Activated CD4-positive, alpha-beta memory T cell treated with anti-CD3 and anti-CD28 coated beads for 36 hours (primary cell): ENCODE measurements at regions of chr3 and their contacts with region 1.

Region 1: DNA sequence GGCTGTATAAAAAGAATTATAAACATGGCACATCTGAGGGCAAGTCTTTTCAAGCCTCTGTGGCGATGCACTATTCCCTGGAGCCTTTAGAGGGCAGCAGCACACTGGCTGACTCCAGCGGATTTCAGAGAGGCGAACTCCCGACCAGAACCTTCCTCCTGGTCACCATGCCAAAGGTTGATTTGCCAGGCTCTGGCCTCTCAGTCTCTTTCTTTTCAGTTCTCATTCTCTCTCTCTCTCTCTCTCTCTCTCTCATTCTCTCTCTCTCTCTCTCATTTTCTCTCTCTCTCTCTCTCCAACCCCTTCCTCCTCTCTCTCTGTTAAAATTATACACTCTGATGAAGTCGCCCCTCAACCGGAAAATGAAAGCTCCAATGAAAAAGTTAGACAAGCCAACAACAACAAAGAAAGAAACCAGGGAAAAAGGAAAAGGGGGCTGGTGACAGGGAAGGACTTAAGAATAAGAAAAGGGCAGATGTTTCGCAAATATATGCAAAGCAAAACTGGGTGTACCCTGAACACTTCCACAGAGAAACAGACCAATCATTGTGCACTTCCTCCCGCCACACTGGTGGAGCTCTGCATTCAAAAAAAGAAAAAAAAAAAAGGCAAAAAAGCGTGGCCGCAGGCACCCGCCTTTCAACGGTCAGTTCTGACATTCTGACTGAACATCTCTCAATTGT is 90.2 kb downstream of the TIGIT start:
- DNase-seq: peak; percentile 83
- H3K4me3 Mint-ChIP-seq: peak overlapping the region; percentile 68
- H3K27ac Mint-ChIP-seq: peak overlapping the region; percentile 77
- H3K4me1 Mint-ChIP-seq: peaks cover 6% of the 10 kb centered on the region
- H3K27me3 Mint-ChIP-seq: no peaks in the 10 kb centered on the region

Region 2: GRCh38 chr3:114405202-114405990 is 21.4 kb after region 1 on chr3:
- CTCF ChIA-PET with region 1: interaction called, 15 read pairs
- POLR2A ChIA-PET with region 1: no interaction called
- intact Hi-C with region 1: no loop called
- DNase-seq: no peak
- H3K4me3 Mint-ChIP-seq: no peak overlapping the region
- H3K27ac Mint-ChIP-seq: no peak overlapping the region
- H3K4me1 Mint-ChIP-seq: peaks cover 4% of the 10 kb centered on the region
- H3K27me3 Mint-ChIP-seq: no peaks in the 10 kb centered on the region

Region 3: GRCh38 chr3:114411811-114412803 is 28.1 kb after region 1 on chr3:
- CTCF ChIA-PET with region 1: interaction called, 19 read pairs
- POLR2A ChIA-PET with region 1: interaction called, 3 read pairs
- intact Hi-C with region 1: loop called (anchors 1 kb)
- DNase-seq: peak; percentile 57
- H3K4me3 Mint-ChIP-seq: no peak overlapping the region
- H3K27ac Mint-ChIP-seq: peak overlapping the region; percentile 44
- H3K4me1 Mint-ChIP-seq: peaks cover 24% of the 10 kb centered on the region
- H3K27me3 Mint-ChIP-seq: no peaks in the 10 kb centered on the region

Region 4: DNA sequence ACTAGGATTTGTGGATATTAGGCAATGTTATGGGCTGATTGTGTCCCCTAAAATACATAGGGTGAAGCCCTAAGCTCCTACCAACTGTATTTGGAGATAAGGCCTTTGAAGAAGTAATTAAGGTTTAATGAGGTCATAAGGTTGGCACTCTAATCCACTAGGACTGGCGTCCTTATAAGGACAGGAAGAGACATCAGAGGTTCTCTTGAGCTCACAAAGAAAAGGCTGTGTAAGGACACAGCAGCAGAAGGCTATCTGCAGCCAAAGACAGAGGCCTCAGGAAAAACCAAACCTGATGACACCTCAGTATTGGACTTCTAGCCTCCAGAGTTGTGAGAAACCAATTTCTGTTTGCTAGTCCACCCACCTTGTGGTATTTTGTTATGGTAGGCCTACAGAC is 346.4 kb after region 1 on chr3:
- CTCF ChIA-PET with region 1: no interaction called
- POLR2A ChIA-PET with region 1: no interaction called
- intact Hi-C with region 1: no loop called
- DNase-seq: no peak
- H3K4me3 Mint-ChIP-seq: no peak overlapping the region
- H3K27ac Mint-ChIP-seq: no peak overlapping the region
- H3K4me1 Mint-ChIP-seq: no peaks in the 10 kb centered on the region
- H3K27me3 Mint-ChIP-seq: no peaks in the 10 kb centered on the region

Region 5: GRCh38 chr3:114827495-114827894 is 443.5 kb after region 1 on chr3:
- CTCF ChIA-PET with region 1: no interaction called
- POLR2A ChIA-PET with region 1: no interaction called
- intact Hi-C with region 1: loop called (anchors 10 kb)
- DNase-seq: no peak
- H3K4me3 Mint-ChIP-seq: no peak overlapping the region
- H3K27ac Mint-ChIP-seq: no peak overlapping the region
- H3K4me1 Mint-ChIP-seq: peaks cover 4% of the 10 kb centered on the region
- H3K27me3 Mint-ChIP-seq: no peaks in the 10 kb centered on the region

Region 6: DNA sequence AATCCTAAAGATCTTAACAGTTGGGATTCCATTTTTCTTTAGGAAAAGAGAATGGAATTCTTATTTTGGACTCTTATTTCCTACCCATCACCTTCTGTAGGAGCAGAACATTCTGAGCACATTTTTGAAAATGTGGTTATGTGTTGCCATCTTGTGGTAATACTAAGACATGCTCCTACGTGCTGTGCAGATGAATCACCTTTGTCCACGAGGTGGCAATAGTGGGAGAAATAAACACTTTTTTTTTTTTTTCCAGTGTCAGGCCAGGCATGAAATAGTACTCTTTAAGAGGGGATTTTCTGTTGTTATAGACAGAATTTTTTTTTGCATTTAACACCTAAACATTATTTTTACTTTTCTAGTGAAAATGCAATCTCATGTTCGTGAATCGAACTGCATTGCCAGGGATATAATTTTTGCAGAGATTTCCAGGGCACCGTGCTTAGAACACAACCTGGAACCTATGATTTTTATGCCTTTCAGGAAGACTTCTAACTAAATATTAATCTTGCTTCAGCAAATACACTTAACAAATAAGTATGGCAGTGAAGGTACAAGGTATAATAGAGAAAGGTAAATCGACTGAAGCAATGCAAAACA is 1435.9 kb after region 1 on chr3:
- CTCF ChIA-PET with region 1: no interaction called
- POLR2A ChIA-PET with region 1: no interaction called
- intact Hi-C with region 1: loop called (anchors 10 kb)
- DNase-seq: peak; percentile 67
- H3K4me3 Mint-ChIP-seq: no peak overlapping the region
- H3K27ac Mint-ChIP-seq: no peak overlapping the region
- H3K4me1 Mint-ChIP-seq: no peaks in the 10 kb centered on the region
- H3K27me3 Mint-ChIP-seq: no peaks in the 10 kb centered on the region